ENCODE measurements at regions of chr3 and their contacts with region 1.

Region 1: GRCh38 chr3:39541917-39542329 is 74.4 kb downstream of the MOBP start:
- DNase-seq: no peak
- ATAC-seq: peak; percentile 41
- H3K4me3 Mint-ChIP-seq: no peak overlapping the region
- H3K27ac Mint-ChIP-seq: no peak overlapping the region
- H3K4me1 Mint-ChIP-seq: peaks cover 23% of the 10 kb centered on the region
- H3K27me3 Mint-ChIP-seq: no peaks in the 10 kb centered on the region; the same call in 1 of the 2 replicates
- CTCF ChIP-seq: peak; percentile 25; the same call in 1 of the 2 replicates

Region 2: DNA sequence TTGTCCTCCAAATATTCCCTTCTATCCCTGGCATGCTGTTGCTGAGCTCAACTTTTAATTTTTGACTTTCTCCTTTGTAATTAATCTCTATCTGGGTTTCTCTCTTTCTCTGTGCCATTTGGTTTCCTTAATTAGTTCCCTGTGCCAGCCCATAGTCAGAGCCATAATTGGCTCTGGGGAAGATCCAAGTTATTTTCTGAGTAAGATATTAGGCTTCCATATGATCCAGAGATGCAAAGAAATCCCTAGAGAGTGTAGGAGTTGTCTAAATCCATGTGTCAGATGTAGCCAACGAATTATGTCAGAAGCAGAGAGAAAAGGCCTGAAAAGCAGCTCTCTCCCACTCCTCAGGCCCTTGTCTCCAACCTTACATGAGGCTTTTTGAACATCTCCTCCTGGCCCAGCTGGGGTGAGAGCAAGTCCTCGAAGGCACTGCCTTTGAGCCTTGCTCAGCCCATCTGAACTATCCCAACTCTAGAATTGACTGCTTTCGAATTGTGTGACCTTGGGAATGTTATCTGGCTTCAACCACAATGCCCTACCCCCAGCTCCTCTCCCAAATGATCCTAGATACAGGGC is 28.0 kb before region 1 on chr3:
- CTCF ChIA-PET with region 1: no interaction called
- POLR2A ChIA-PET with region 1: no interaction called
- DNase-seq: no peak
- ATAC-seq: no peak
- H3K4me3 Mint-ChIP-seq: no peak overlapping the region
- H3K27ac Mint-ChIP-seq: no peak overlapping the region
- H3K4me1 Mint-ChIP-seq: peaks cover 12% of the 10 kb centered on the region
- H3K27me3 Mint-ChIP-seq: peaks cover 9% of the 10 kb centered on the region
- CTCF ChIP-seq: no peak

Region 3: DNA sequence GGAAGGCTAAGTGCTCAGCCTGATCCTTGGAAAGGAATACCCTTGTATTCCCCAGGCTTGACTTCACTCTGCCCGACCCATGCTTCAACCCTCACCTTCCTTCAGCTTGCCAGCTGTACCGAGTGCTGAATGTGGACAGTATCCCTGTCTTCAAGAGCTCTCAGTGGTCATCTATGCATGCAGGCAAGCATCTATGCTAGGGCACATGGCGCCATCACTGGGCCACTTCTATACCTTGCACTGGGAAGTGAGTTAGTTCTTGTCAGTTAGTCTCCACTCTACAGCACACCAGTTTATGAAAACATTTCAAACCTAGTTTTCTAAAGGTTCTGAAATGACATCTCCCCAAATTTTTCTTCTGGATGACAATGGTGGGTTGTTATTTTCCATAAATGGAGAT is 185.5 kb after region 1 on chr3:
- CTCF ChIA-PET with region 1: interaction called, 18 read pairs
- POLR2A ChIA-PET with region 1: no interaction called
- DNase-seq: peak; percentile 44
- ATAC-seq: peak; percentile 84
- H3K4me3 Mint-ChIP-seq: no peak overlapping the region
- H3K27ac Mint-ChIP-seq: no peak overlapping the region
- H3K4me1 Mint-ChIP-seq: no peaks in the 10 kb centered on the region
- H3K27me3 Mint-ChIP-seq: peaks cover 3% of the 10 kb centered on the region; the same call in 1 of the 2 replicates
- CTCF ChIP-seq: no peak